ENCODE measurements at regions of chr2 and their contacts with region 1.

Region 1: GRCh38 chr2:64914735-64915509 is 74.3 kb upstream of the SLC1A4 start:
- DNase-seq: no peak
- H3K4me3 Mint-ChIP-seq: no peak overlapping the region
- H3K27ac Mint-ChIP-seq: no peak overlapping the region
- H3K4me1 Mint-ChIP-seq: peaks cover 15% of the 10 kb centered on the region
- H3K27me3 Mint-ChIP-seq: no peaks in the 10 kb centered on the region

Region 2: GRCh38 chr2:64698668-64699444 is 216.1 kb before region 1 on chr2:
- CTCF ChIA-PET with region 1: no interaction called
- POLR2A ChIA-PET with region 1: no interaction called
- intact Hi-C with region 1: no loop called
- DNase-seq: no peak
- H3K4me3 Mint-ChIP-seq: peak overlapping the region; percentile 47
- H3K27ac Mint-ChIP-seq: peak overlapping the region; percentile 72
- H3K4me1 Mint-ChIP-seq: peaks cover 41% of the 10 kb centered on the region
- H3K27me3 Mint-ChIP-seq: no peaks in the 10 kb centered on the region

Region 3: DNA sequence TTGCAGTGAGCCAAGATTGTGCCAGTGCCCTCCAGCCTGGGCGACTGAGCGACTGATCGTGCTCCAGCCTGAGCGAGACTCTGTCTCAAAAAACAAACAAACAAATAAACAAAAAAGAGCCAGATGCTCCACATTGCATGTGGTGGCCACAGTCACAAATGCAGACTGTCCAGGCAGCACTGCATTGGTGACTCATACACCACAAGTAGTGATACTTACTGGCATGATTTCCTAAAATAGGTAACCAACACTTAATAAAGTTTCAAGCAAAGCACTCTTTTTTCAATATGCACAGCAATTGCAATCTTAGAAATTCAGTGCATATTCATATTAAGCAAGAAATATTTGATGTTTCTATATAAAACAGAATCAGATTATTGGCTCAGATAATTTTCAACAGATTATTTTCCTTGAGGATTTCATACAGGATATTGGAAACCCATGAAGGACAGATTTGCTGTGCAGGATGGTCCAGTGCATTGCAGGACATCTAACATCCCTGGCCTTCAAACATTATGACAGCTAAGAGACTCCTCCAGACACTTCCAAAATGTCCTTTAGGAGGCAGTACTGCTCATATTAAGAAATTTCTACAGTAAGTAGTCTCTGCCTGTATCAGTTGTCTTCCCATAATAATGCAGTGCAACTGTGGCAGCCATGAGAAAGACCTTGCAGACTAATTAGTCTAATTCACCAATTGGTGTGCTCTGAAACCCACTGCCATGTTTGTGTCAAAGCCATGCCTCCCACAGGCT is 63.8 kb after region 1 on chr2:
- CTCF ChIA-PET with region 1: interaction called, 17 read pairs
- POLR2A ChIA-PET with region 1: no interaction called
- intact Hi-C with region 1: no loop called
- DNase-seq: no peak
- H3K4me3 Mint-ChIP-seq: no peak overlapping the region
- H3K27ac Mint-ChIP-seq: no peak overlapping the region
- H3K4me1 Mint-ChIP-seq: peaks cover 21% of the 10 kb centered on the region
- H3K27me3 Mint-ChIP-seq: no peaks in the 10 kb centered on the region

Region 4: GRCh38 chr2:65031341-65032018 is 116.6 kb after region 1 on chr2:
- CTCF ChIA-PET with region 1: interaction called, 232 read pairs
- POLR2A ChIA-PET with region 1: no interaction called
- intact Hi-C with region 1: loop called (anchors 1 kb)
- DNase-seq: peak; percentile 13
- H3K4me3 Mint-ChIP-seq: no peak overlapping the region
- H3K27ac Mint-ChIP-seq: no peak overlapping the region
- H3K4me1 Mint-ChIP-seq: peaks cover 23% of the 10 kb centered on the region
- H3K27me3 Mint-ChIP-seq: no peaks in the 10 kb centered on the region

Region 5: DNA sequence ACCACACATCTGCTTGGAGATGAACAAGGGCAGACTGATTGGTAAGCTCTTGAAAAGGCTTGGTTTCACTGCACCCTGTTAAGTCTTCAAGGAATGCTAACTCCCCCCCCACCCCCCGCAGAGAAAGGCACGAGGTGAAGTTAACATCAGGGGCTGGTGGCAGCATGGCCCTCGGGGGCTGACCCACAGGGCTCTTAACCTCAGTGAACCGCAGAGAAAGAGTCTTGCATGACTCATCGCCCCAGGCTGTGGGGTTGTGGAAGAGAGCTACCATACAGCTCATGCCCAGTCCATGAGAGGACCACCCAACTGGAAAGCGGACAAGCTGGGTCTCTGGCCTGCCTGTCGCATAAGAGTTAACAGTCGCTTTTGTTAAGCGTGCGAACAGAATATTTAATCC is 130.7 kb after region 1 on chr2:
- CTCF ChIA-PET with region 1: interaction called, 232 read pairs
- POLR2A ChIA-PET with region 1: interaction called, 3 read pairs
- intact Hi-C with region 1: loop called (anchors 1 kb)
- DNase-seq: no peak
- H3K4me3 Mint-ChIP-seq: no peak overlapping the region
- H3K27ac Mint-ChIP-seq: no peak overlapping the region
- H3K4me1 Mint-ChIP-seq: no peaks in the 10 kb centered on the region
- H3K27me3 Mint-ChIP-seq: no peaks in the 10 kb centered on the region

Region 6: DNA sequence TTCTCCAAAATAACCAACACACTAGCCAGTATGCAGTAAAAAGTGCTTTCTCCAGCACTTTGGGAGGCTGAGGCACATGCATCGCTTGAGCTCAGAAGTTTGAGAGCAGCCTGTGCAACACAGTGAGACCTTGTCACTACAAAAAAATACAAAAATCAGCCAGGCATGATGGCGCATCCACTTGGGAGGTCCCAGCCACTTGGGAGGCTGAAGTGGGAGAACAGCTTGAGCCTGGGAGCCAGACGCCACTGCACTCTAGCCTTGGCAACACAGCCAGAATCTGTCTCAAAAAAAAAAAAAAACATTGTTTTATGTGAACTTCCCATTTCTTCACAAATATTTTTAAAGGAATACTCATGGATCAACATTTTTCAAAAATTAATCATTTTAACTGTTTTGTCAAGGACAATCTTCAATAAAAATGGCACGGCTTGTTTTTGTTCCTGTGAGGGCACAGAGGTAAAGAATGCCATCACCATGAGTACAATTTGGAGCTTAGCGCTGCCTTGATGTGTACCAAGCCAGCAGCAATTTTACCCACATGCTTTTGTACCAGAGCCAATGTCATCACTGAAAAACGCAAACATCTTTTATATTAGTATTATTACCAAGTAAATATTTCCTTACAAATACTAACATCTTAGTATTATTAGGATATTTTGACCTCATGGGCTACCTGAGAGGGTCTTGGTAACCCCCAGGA is 188.2 kb after region 1 on chr2:
- CTCF ChIA-PET with region 1: no interaction called
- POLR2A ChIA-PET with region 1: no interaction called
- intact Hi-C with region 1: no loop called
- DNase-seq: no peak
- H3K4me3 Mint-ChIP-seq: no peak overlapping the region
- H3K27ac Mint-ChIP-seq: no peak overlapping the region
- H3K4me1 Mint-ChIP-seq: peaks cover 19% of the 10 kb centered on the region
- H3K27me3 Mint-ChIP-seq: no peaks in the 10 kb centered on the region

Region 7: GRCh38 chr2:65129826-65130663 is 215.1 kb after region 1 on chr2 and contains the start of gene RAB1A:
- CTCF ChIA-PET with region 1: interaction called, 7 read pairs
- POLR2A ChIA-PET with region 1: no interaction called
- intact Hi-C with region 1: loop called (anchors 1 kb)
- DNase-seq: peak; percentile 100
- H3K4me3 Mint-ChIP-seq: peak within 1 kb of the TSS; percentile 96
- H3K27ac Mint-ChIP-seq: peak within 1 kb of the TSS; percentile 95
- H3K4me1 Mint-ChIP-seq: peaks cover 34% of the 10 kb centered on the region
- H3K27me3 Mint-ChIP-seq: no peaks in the 10 kb centered on the region
- total RNA-seq, gene RAB1A: 84.3 to 84.5 TPM

Region 8: DNA sequence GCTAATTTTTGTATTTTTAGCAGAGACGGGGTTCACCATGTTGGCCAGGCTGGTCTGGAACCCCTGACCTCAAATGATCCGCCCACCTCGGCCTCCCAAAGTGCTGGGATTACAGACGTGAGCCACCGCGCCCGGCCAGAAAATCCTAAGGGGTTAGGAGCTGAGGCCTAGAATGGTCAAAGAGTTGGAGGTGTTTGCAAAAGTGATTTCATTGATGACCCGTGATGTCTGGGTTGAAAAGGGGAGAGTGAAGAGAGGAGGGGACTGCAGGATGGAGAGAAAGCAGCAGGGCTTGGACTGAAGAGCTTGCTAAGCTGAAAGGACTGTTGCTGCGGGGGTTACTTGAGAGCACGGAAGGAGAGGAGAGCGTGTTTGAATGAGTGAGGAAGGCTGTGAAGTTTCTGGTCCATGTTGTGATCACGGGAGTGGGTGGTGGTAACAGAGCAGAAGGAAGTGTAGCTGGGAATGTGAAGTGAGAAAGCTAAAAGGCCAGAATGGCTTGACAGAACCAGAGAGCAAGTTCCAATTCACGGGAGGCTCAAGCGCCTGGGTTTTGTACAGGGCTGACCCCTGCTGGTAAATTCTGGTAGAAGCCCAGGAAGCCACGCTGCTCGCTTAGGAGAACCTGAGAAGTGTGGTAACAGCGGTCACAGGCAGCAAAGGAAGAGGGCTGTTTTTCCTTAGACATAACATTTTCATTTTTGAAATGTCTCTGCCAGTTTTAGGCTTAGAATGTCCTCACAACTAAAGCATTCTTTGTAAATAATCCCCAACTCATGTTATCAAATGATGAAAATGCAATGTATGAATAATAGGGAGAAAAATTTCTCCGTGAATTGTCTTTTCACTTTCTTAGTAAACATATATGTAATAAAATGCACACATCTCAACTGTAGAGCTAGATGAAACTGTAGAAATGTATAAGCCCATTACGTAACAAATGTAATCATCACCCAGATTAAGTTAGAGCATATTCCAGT is 272.2 kb after region 1 on chr2:
- CTCF ChIA-PET with region 1: interaction called, 14 read pairs
- POLR2A ChIA-PET with region 1: no interaction called
- intact Hi-C with region 1: loop called (anchors 5 kb)
- DNase-seq: peak; percentile 76
- H3K4me3 Mint-ChIP-seq: no peak overlapping the region
- H3K27ac Mint-ChIP-seq: no peak overlapping the region
- H3K4me1 Mint-ChIP-seq: peaks cover 10% of the 10 kb centered on the region
- H3K27me3 Mint-ChIP-seq: peaks cover 16% of the 10 kb centered on the region

Measured in activated CD4-positive, alpha-beta memory T cell treated with anti-CD3 and anti-CD28 coated beads for 36 hours (primary cell).